ENCODE measurements at regions of chr15 and their contacts with region 1.

Region 1: GRCh38 chr15:42548253-42549031 is at the starts of genes HAUS2 and LRRC57:
- DNase-seq: peak; percentile 91
- H3K4me3 ChIP-seq: peak within 1 kb of the TSS; percentile 100
- H3K27ac ChIP-seq: peak within 1 kb of the TSS; percentile 95
- H3K4me1 ChIP-seq: peaks cover 42% of the 10 kb centered on the region
- H3K27me3 ChIP-seq: no peaks in the 10 kb centered on the region
- CTCF ChIP-seq: no peak
- total RNA-seq, gene HAUS2: 9.9 TPM
- total RNA-seq, gene LRRC57: 15.0 TPM

Region 2: GRCh38 chr15:42495361-42496212 is 52.9 kb before region 1 on chr15 and contains the start of gene SNAP23:
- intact Hi-C with region 1: no loop called
- DNase-seq: peak; percentile 93
- H3K4me3 ChIP-seq: peak within 1 kb of the TSS; percentile 78
- H3K27ac ChIP-seq: peak within 1 kb of the TSS; percentile 91
- H3K4me1 ChIP-seq: peaks cover 76% of the 10 kb centered on the region
- H3K27me3 ChIP-seq: no peaks in the 10 kb centered on the region
- CTCF ChIP-seq: no peak
- total RNA-seq, gene SNAP23: 34.1 TPM

Region 3: DNA sequence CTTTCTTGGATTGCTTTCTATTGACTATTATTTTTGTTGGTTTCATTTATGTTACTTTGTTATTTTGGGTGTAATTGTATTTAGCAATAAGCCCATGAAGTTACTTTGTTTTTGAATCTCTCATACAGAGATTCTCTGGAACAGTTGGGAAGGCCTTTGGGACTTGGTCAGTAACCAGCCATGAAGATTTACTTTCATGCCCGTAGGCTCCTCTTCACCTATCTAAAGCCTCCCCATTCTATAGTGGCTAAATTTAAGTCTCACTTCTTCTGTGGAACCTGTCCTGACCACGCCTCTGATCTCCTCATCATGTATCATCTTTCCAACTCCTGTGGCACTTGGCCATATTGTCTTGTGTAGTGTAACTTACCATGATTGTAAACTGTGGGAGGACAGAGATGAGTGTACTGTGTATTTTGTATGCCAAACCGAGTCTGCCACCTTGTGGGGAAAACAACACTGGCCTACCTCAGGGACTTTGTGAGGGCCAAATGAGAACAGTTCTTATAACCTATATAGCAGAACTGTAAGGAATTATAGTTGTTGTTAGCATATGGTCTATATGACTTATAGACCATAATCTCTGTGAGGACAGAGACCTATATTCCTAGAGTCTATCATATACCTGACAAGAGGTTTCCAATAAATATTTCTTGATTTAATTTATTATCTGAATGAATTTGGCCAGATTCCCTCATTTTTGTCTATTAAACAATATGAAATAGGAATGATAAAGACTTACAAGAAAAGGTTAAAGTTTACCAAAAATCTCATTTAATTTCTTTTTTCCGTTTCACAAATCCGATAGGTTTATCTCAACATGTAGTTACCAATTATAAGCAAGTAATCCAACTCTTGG is 102.0 kb after region 1 on chr15:
- intact Hi-C with region 1: loop called (anchors 10 kb)
- DNase-seq: peak; percentile 28
- H3K4me3 ChIP-seq: no peak overlapping the region
- H3K27ac ChIP-seq: no peak overlapping the region
- H3K4me1 ChIP-seq: peaks cover 4% of the 10 kb centered on the region
- H3K27me3 ChIP-seq: no peaks in the 10 kb centered on the region
- CTCF ChIP-seq: peak; percentile 87

Region 4: DNA sequence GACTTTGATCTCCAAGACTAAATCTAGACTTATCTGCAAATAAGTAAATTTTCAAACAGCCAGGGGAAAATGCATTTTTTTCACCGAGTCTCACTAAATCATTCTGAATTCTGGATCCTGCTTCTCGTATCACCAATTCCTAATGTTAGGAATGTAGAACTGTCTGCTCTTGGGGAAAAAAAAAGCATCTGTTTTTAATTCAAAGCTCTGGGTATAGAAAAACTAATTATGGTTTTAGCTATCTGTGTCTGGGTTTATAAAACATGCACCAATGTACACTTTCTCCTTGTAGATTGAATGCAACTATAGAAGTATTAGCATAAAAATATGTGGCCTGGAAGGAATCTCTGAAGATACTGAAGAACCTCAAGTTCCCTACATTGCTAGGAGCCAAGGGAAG is 193.3 kb after region 1 on chr15:
- intact Hi-C with region 1: no loop called
- DNase-seq: no peak
- H3K4me3 ChIP-seq: no peak overlapping the region
- H3K27ac ChIP-seq: no peak overlapping the region
- H3K4me1 ChIP-seq: peaks cover 26% of the 10 kb centered on the region
- H3K27me3 ChIP-seq: no peaks in the 10 kb centered on the region
- CTCF ChIP-seq: no peak